ENCODE measurements at regions of chr3 and their contacts with region 1.

Region 1: GRCh38 chr3:47849699-47850563 is 47.0 kb downstream of the DHX30 start:
- DNase-seq: peak in 2 of 5 donors; percentile 37 to 46
- H3K4me3 ChIP-seq: no peak overlapping the region
- H3K27ac ChIP-seq: no peak overlapping the region
- H3K4me1 ChIP-seq: no peaks in the 10 kb centered on the region
- H3K27me3 ChIP-seq: no peaks in the 10 kb centered on the region
- CTCF ChIP-seq: no peak
- EP300 ChIP-seq: no peak
- POLR2A ChIP-seq: no peak

Region 2: GRCh38 chr3:47984097-47984728 is 134.3 kb after region 1 on chr3:
- intact Hi-C with region 1: loop called in 1 of 4 experiments (anchors 5 kb)
- DNase-seq: no peak
- H3K4me3 ChIP-seq: no peak overlapping the region
- H3K27ac ChIP-seq: no peak overlapping the region
- H3K4me1 ChIP-seq: peaks cover 1% of the 10 kb centered on the region
- H3K27me3 ChIP-seq: no peaks in the 10 kb centered on the region
- CTCF ChIP-seq: no peak
- EP300 ChIP-seq: no peak
- POLR2A ChIP-seq: no peak

Region 3: GRCh38 chr3:48240711-48241491 is 391.0 kb after region 1 on chr3 and contains the start of gene ZNF589:
- intact Hi-C with region 1: no loop called
- DNase-seq: peak; percentile 85 to 91 (median 90)
- H3K4me3 ChIP-seq: peak within 1 kb of the TSS; percentile 86
- H3K27ac ChIP-seq: peak within 1 kb of the TSS; percentile 46 to 77
- H3K4me1 ChIP-seq: peaks cover 2% of the 10 kb centered on the region
- H3K27me3 ChIP-seq: no peaks in the 10 kb centered on the region
- CTCF ChIP-seq: peak in 2 of 3 donors; percentile 25 to 52
- EP300 ChIP-seq: no peak
- POLR2A ChIP-seq: peak; percentile 75
- total RNA-seq, gene ZNF589: 9.7 to 17.8 (median 14.4) TPM

Measured in ovary (tissue), 10 donors.